Gastrocnemius medialis (tissue), 4 donors: ENCODE measurements at regions of chr3 and their contacts with region 1.

Region 1: GRCh38 chr3:126083913-126084767 is at the start of gene SLC41A3:
- DNase-seq: peak; percentile 78 to 85
- ATAC-seq: peak; percentile 61 to 65
- H3K4me3 ChIP-seq: peak within 1 kb of the TSS; percentile 61 to 86 (median 82)
- H3K27ac ChIP-seq: peak within 1 kb of the TSS; percentile 94 to 97 (median 96)
- H3K4me1 ChIP-seq: peaks cover 18 to 22% of the 10 kb centered on the region in 2 donors
- H3K27me3 ChIP-seq: no peaks in the 10 kb centered on the region
- CTCF ChIP-seq: peak; percentile 41 to 50 (median 46)
- POLR2A ChIP-seq: peak; percentile 78 to 81
- total RNA-seq, gene SLC41A3: 43.1 to 76.2 (median 56.7) TPM

Region 2: GRCh38 chr3:125967138-125967537 is 117.0 kb before region 1 on chr3:
- in situ Hi-C with region 1: loop called in 1 of 4 experiments (anchors 10 kb)
- intact Hi-C with region 1: no loop called
- DNase-seq: no peak
- ATAC-seq: no peak
- H3K4me3 ChIP-seq: no peak overlapping the region
- H3K27ac ChIP-seq: no peak overlapping the region
- H3K4me1 ChIP-seq: peaks cover 2 to 6% of the 10 kb centered on the region in 2 donors
- H3K27me3 ChIP-seq: peaks cover 0 to 5% (median 2%) of the 10 kb centered on the region in 3 donors
- CTCF ChIP-seq: no peak
- POLR2A ChIP-seq: no peak

Region 3: GRCh38 chr3:125990253-125990970 is 93.7 kb before region 1 on chr3:
- in situ Hi-C with region 1: no loop called
- intact Hi-C with region 1: loop called (anchors 10 kb)
- DNase-seq: peak; percentile 81 to 87
- ATAC-seq: peak; percentile 97 to 99
- H3K4me3 ChIP-seq: peak overlapping the region; percentile 67 to 83 (median 74)
- H3K27ac ChIP-seq: peak overlapping the region; percentile 81 to 88 (median 84)
- H3K4me1 ChIP-seq: peaks cover 7 to 8% of the 10 kb centered on the region in 2 donors
- H3K27me3 ChIP-seq: no peaks in the 10 kb centered on the region
- CTCF ChIP-seq: no peak
- POLR2A ChIP-seq: peak; percentile 55 to 56

Region 4: DNA sequence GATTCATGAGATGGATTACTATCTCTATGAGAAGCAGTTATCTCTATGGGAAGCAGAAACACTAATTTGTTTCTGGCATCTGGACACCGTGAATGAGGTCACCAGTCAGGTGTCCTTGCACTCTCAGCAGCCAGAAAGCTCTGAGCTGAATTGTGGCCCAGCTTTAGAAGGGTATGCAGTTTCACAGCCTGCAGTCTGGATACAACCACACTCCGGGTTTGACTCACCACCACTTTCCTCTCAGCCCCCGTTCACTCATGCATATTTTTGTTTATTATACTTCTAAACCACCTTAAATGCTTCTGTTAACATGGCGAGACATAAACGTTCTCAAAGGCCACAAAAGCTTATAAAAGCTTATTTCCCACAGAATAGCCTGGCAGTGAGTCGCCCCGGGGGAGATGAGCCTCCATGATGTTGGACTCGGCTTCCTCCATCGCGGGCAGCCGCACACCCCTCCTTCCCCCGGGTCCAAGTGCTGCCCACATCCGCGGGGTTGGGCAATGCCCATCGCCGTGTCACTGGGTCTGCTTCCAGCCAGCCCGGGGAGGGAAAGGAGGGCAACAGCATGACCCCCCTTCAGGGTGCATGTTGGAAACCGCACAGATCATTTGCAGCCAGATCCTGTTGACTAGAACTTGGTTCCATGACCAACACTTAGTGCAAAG is 16.6 kb after region 1 on chr3:
- in situ Hi-C with region 1: no loop called
- intact Hi-C with region 1: loop called (anchors 2 kb)
- DNase-seq: peak; percentile 49 to 74
- ATAC-seq: peak; percentile 72 to 76
- H3K4me3 ChIP-seq: peak overlapping the region in 3 of 4 donors; percentile 31 to 42 (median 32)
- H3K27ac ChIP-seq: peak overlapping the region; percentile 84 to 87 (median 84)
- H3K4me1 ChIP-seq: peaks cover 64 to 65% of the 10 kb centered on the region in 2 donors
- H3K27me3 ChIP-seq: no peaks in the 10 kb centered on the region
- CTCF ChIP-seq: no peak
- POLR2A ChIP-seq: peak; percentile 33 to 61